CD8-positive, alpha-beta T cell (primary cell): ENCODE measurements at regions of chr19 and their contacts with region 1.

Region 1: GRCh38 chr19:1064661-1065605 is 2.0 kb upstream of the ARHGAP45 start:
- DNase-seq: peak; percentile 46 to 89 (median 73)
- ATAC-seq: peak; percentile 20
- H3K4me3 ChIP-seq: peak overlapping the region in 1 of 2 experiments; percentile 25
- H3K4me3 Mint-ChIP-seq: peak overlapping the region; percentile 61
- H3K27ac ChIP-seq: no peak overlapping the region
- H3K27ac Mint-ChIP-seq: peak overlapping the region; percentile 93
- H3K4me1 ChIP-seq: peaks cover 42% of the 10 kb centered on the region
- H3K4me1 Mint-ChIP-seq: peaks cover 40% of the 10 kb centered on the region
- H3K27me3 ChIP-seq: no peaks in the 10 kb centered on the region
- H3K27me3 Mint-ChIP-seq: no peaks in the 10 kb centered on the region
- CTCF ChIP-seq: peak; percentile 81

Region 2: GRCh38 chr19:892243-893050 is 172.5 kb before region 1 on chr19:
- CTCF ChIA-PET with region 1: no interaction called
- POLR2A ChIA-PET with region 1: no interaction called
- intact Hi-C with region 1: no loop called
- DNase-seq: peak in 5 of 9 experiments; percentile 37 to 54 (median 48)
- ATAC-seq: peak; percentile 35
- H3K4me3 ChIP-seq: peak overlapping the region; percentile 62 to 67
- H3K4me3 Mint-ChIP-seq: peak overlapping the region; percentile 95
- H3K27ac ChIP-seq: peak overlapping the region; percentile 65 to 98
- H3K27ac Mint-ChIP-seq: peak overlapping the region; percentile 100
- H3K4me1 ChIP-seq: peaks cover 11% of the 10 kb centered on the region
- H3K4me1 Mint-ChIP-seq: peaks cover 36% of the 10 kb centered on the region
- H3K27me3 ChIP-seq: no peaks in the 10 kb centered on the region
- H3K27me3 Mint-ChIP-seq: no peaks in the 10 kb centered on the region
- CTCF ChIP-seq: no peak

Region 3: GRCh38 chr19:970695-971094 is 94.2 kb before region 1 on chr19:
- CTCF ChIA-PET with region 1: no interaction called
- POLR2A ChIA-PET with region 1: no interaction called
- intact Hi-C with region 1: no loop called
- DNase-seq: peak in 2 of 9 experiments; percentile 27 to 37
- ATAC-seq: no peak
- H3K4me3 ChIP-seq: no peak overlapping the region
- H3K4me3 Mint-ChIP-seq: no peak overlapping the region
- H3K27ac ChIP-seq: no peak overlapping the region
- H3K27ac Mint-ChIP-seq: no peak overlapping the region
- H3K4me1 ChIP-seq: no peaks in the 10 kb centered on the region
- H3K4me1 Mint-ChIP-seq: no peaks in the 10 kb centered on the region
- H3K27me3 ChIP-seq: no peaks in the 10 kb centered on the region
- H3K27me3 Mint-ChIP-seq: no peaks in the 10 kb centered on the region
- CTCF ChIP-seq: peak; percentile 62

Region 4: DNA sequence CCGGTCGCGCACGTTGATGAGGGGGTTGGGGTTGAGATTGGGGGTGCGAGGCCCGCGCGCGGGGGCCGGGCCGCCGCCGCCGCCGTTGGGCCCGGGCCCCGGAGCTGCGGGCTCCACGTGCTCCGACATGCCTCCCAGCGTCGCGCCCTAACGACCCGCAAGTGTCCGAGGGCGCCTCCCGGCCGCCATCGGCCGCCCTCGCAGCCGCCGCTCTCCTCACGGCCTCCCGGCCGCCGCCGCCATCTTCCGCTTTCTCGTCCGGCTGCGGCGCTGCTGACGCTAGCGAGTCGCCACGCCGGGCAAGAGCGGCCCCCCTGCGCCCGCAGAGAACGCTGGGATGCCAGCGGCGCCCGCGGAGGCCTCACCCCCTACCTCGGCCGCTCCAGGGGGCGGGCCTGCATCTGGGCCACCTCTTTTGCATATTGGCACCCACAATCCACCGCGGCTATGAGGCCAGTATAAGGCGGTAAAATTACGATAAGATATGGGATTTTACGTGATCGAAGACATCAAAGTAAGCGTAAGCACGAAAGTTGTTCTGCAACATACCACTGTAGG is 44.0 kb before region 1 on chr19 and contains the start of gene TMEM259:
- CTCF ChIA-PET with region 1: interaction called, 9 read pairs
- POLR2A ChIA-PET with region 1: interaction called, 647 read pairs
- intact Hi-C with region 1: loop called (anchors 1 to 2 kb)
- DNase-seq: peak; percentile 94 to 98 (median 98)
- ATAC-seq: peak; percentile 86
- H3K4me3 ChIP-seq: peak within 1 kb of the TSS; percentile 89 to 94
- H3K4me3 Mint-ChIP-seq: peak within 1 kb of the TSS; percentile 90
- H3K27ac ChIP-seq: peak within 1 kb of the TSS; percentile 97 to 99
- H3K27ac Mint-ChIP-seq: peak within 1 kb of the TSS; percentile 100
- H3K4me1 ChIP-seq: peaks cover 43% of the 10 kb centered on the region
- H3K4me1 Mint-ChIP-seq: peaks cover 45% of the 10 kb centered on the region
- H3K27me3 ChIP-seq: no peaks in the 10 kb centered on the region
- H3K27me3 Mint-ChIP-seq: no peaks in the 10 kb centered on the region
- CTCF ChIP-seq: no peak
- total RNA-seq, gene TMEM259: 408 to 443 TPM

Region 5: DNA sequence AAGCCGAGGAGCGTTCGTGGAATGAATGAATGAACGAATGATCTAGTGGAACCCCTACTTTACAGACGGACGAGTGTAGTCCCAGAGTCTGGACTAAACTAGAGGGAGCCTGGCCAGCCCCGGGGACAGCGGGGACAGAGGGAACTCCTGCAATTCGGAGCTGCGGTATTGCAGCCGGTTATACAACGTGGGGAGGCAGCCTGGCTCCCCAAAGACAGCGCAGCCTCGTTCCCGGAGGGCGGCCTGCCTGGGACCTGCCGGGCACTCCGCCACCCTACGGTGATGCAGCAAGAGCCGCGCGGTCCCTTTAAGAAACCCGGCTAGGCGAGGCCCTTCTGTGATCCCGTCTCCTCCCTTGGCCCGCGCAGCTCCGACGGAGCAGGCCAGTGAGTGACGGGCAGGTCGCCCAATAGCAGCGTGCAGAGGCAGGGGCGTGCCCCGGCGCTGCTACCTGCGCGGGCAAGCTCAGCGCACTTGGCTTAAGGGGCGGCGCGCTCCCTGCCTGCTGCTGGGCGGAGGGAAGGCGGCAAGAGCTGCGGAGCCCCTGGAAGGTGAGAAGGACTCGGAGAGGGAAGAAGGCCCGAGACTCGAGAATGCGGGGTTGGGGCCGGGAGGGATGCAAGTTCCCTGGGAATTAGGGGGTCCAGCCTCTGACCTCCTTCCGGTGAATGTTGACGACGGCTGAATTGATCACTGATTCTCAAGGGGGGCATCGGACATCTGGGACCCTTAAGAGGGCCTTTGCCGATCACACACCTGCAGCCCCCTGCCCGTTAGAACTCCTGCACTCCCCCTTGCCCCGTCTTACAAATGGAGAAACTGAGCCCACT is 25.1 kb before region 1 on chr19 and contains the start of gene ABCA7:
- CTCF ChIA-PET with region 1: interaction called, 24 read pairs
- POLR2A ChIA-PET with region 1: interaction called, 110 read pairs
- intact Hi-C with region 1: loop called (anchors 2 kb)
- DNase-seq: peak; percentile 98 to 100 (median 99)
- ATAC-seq: peak; percentile 90
- H3K4me3 ChIP-seq: peak within 1 kb of the TSS; percentile 71 to 96
- H3K4me3 Mint-ChIP-seq: peak within 1 kb of the TSS; percentile 99
- H3K27ac ChIP-seq: peak within 1 kb of the TSS; percentile 65 to 71
- H3K27ac Mint-ChIP-seq: peak within 1 kb of the TSS; percentile 96
- H3K4me1 ChIP-seq: peaks cover 43% of the 10 kb centered on the region
- H3K4me1 Mint-ChIP-seq: peaks cover 50% of the 10 kb centered on the region
- H3K27me3 ChIP-seq: no peaks in the 10 kb centered on the region
- H3K27me3 Mint-ChIP-seq: no peaks in the 10 kb centered on the region
- CTCF ChIP-seq: no peak
- total RNA-seq, gene ABCA7: 93.3 to 98.0 TPM

Region 6: DNA sequence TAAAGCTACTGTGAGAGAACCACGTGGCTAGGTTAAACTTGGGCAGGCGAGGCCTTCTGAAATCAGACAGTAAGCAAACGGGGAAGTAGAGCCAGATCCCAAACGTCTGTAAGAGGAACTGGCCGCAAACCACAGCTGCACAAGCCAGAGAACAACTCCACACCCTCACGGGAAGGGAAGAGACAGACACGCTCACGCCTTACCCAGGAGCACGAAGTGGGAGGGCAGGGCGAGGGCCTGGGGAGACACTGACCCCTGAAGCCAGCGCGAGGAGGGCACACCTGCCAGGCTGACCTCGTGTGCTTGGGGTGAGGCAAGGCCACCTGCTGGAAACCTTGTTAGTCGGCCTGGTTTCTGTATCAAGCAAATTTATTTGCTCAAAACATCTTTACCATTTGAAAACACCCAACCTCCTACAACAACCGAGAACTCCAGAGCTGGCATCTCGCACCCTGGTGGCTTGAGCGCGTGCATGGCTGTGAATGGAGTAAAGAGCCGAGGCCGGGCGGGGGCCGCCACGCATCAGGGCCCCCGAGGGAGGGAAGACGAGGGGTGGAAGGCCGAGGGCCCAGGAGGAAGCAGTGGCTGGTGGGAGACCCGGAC is 23.0 kb after region 1 on chr19:
- CTCF ChIA-PET with region 1: interaction called, 148 read pairs
- POLR2A ChIA-PET with region 1: interaction called, 1,023 read pairs
- intact Hi-C with region 1: loop called (anchors 1 to 2 kb)
- DNase-seq: peak in 5 of 9 experiments; percentile 61 to 82 (median 68)
- ATAC-seq: peak; percentile 21
- H3K4me3 ChIP-seq: no peak overlapping the region
- H3K4me3 Mint-ChIP-seq: peak overlapping the region; percentile 64
- H3K27ac ChIP-seq: peak overlapping the region; percentile 29 to 74
- H3K27ac Mint-ChIP-seq: peak overlapping the region; percentile 95
- H3K4me1 ChIP-seq: peaks cover 90% of the 10 kb centered on the region
- H3K4me1 Mint-ChIP-seq: peaks cover 44% of the 10 kb centered on the region
- H3K27me3 ChIP-seq: no peaks in the 10 kb centered on the region
- H3K27me3 Mint-ChIP-seq: no peaks in the 10 kb centered on the region
- CTCF ChIP-seq: no peak

Region 7: GRCh38 chr19:1103708-1104310 is 38.9 kb after region 1 on chr19 and contains the start of gene GPX4:
- CTCF ChIA-PET with region 1: interaction called, 4 read pairs
- POLR2A ChIA-PET with region 1: interaction called, 16 read pairs
- intact Hi-C with region 1: loop called in 1 of 2 experiments (anchors 5 kb)
- DNase-seq: peak; percentile 96 to 100 (median 98)
- ATAC-seq: peak; percentile 88
- H3K4me3 ChIP-seq: peak within 1 kb of the TSS; percentile 73 to 93
- H3K4me3 Mint-ChIP-seq: peak within 1 kb of the TSS; percentile 76
- H3K27ac ChIP-seq: peak within 1 kb of the TSS; percentile 86
- H3K27ac Mint-ChIP-seq: peak within 1 kb of the TSS; percentile 92
- H3K4me1 ChIP-seq: peaks cover 46% of the 10 kb centered on the region
- H3K4me1 Mint-ChIP-seq: peaks cover 27% of the 10 kb centered on the region
- H3K27me3 ChIP-seq: no peaks in the 10 kb centered on the region
- H3K27me3 Mint-ChIP-seq: no peaks in the 10 kb centered on the region
- CTCF ChIP-seq: no peak
- total RNA-seq, gene GPX4: 172 to 174 TPM

Region 8: GRCh38 chr19:1189419-1189818 is 124.5 kb after region 1 on chr19:
- CTCF ChIA-PET with region 1: interaction called, 10 read pairs
- POLR2A ChIA-PET with region 1: interaction called, 3 read pairs
- intact Hi-C with region 1: no loop called
- DNase-seq: peak in 8 of 9 experiments; percentile 31 to 75 (median 59)
- ATAC-seq: peak; percentile 65
- H3K4me3 ChIP-seq: no peak overlapping the region
- H3K4me3 Mint-ChIP-seq: no peak overlapping the region
- H3K27ac ChIP-seq: peak overlapping the region in 1 of 2 experiments; percentile 28
- H3K27ac Mint-ChIP-seq: peak overlapping the region; percentile 32
- H3K4me1 ChIP-seq: peaks cover 22% of the 10 kb centered on the region
- H3K4me1 Mint-ChIP-seq: peaks cover 20% of the 10 kb centered on the region
- H3K27me3 ChIP-seq: no peaks in the 10 kb centered on the region
- H3K27me3 Mint-ChIP-seq: no peaks in the 10 kb centered on the region
- CTCF ChIP-seq: no peak

Region 9: GRCh38 chr19:1269065-1269477 is 204.1 kb after region 1 on chr19 and contains the start of gene CIRBP:
- CTCF ChIA-PET with region 1: no interaction called
- POLR2A ChIA-PET with region 1: interaction called, 18 read pairs
- intact Hi-C with region 1: no loop called
- DNase-seq: peak; percentile 99 to 100 (median 99)
- ATAC-seq: peak; percentile 80
- H3K4me3 ChIP-seq: peak within 1 kb of the TSS; percentile 65 to 84
- H3K4me3 Mint-ChIP-seq: peak within 1 kb of the TSS; percentile 85
- H3K27ac ChIP-seq: peak within 1 kb of the TSS; percentile 88 to 89
- H3K27ac Mint-ChIP-seq: peak within 1 kb of the TSS; percentile 95
- H3K4me1 ChIP-seq: peaks cover 73% of the 10 kb centered on the region
- H3K4me1 Mint-ChIP-seq: peaks cover 68% of the 10 kb centered on the region
- H3K27me3 ChIP-seq: no peaks in the 10 kb centered on the region
- H3K27me3 Mint-ChIP-seq: no peaks in the 10 kb centered on the region
- CTCF ChIP-seq: no peak
- total RNA-seq, gene CIRBP: 689 to 695 TPM